ENCODE measurements at regions of chr1 and their contacts with region 1.

Region 1: GRCh38 chr1:198556971-198557370 is 16.5 kb upstream of the ATP6V1G3 start:
- DNase-seq: peak; percentile 84
- ATAC-seq: peak; percentile 90
- H3K4me3 ChIP-seq: peak overlapping the region in 3 of 5 experiments; percentile 8 to 53 (median 25)
- H3K4me3 Mint-ChIP-seq: peak overlapping the region; percentile 38
- H3K27ac ChIP-seq: peak overlapping the region; percentile 30 to 58
- H3K27ac Mint-ChIP-seq: peak overlapping the region; percentile 47
- H3K4me1 ChIP-seq: peaks cover 46 to 53% of the 10 kb centered on the region in 2 donors
- H3K4me1 Mint-ChIP-seq: peaks cover 60% of the 10 kb centered on the region
- H3K27me3 ChIP-seq: no peaks in the 10 kb centered on the region
- H3K27me3 Mint-ChIP-seq: no peaks in the 10 kb centered on the region
- CTCF ChIP-seq: no peak

Region 2: DNA sequence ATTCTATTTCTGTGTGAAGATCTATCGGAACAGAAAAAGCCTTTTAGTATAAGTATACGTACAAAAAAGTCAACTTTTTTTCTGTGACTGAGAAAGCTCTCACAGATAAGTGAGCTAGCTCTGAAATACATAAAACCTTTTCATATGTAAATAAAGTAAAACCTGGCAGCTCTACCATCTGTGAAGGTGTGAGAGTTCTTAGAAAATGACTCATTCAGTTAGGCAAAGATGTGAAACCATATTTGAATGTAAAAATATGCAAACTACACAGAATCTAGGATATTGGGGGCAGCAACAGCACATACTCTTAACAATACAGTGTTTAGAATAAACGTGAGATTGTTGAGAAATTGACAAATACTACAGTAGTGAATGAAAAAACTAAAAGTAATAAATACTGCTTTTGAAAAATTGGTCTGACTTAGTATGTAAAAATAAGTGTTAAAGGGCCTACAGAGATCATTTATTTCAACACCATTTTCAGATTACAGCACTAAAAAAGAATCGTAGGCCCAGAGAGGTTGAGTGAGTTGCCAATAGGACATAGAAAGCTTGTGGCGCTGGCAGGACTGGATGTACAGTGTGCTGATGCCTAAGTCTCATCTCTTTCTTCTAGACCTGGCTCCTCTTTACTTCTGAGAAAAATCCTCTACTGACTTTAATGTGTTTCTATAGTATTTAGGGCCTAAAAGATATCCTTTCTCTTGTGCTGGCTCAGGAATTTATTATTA is 36.3 kb before region 1 on chr1:
- CTCF ChIA-PET with region 1: interaction called, 6 read pairs
- POLR2A ChIA-PET with region 1: no interaction called
- intact Hi-C with region 1: loop called (anchors 5 kb)
- DNase-seq: peak; percentile 43
- ATAC-seq: peak; percentile 64
- H3K4me3 ChIP-seq: peak overlapping the region in 1 of 5 experiments; percentile 45
- H3K4me3 Mint-ChIP-seq: peak overlapping the region; percentile 67
- H3K27ac ChIP-seq: peak overlapping the region; percentile 35 to 59
- H3K27ac Mint-ChIP-seq: peak overlapping the region; percentile 37
- H3K4me1 ChIP-seq: peaks cover 20 to 34% of the 10 kb centered on the region in 2 donors
- H3K4me1 Mint-ChIP-seq: peaks cover 57% of the 10 kb centered on the region
- H3K27me3 ChIP-seq: no peaks in the 10 kb centered on the region
- H3K27me3 Mint-ChIP-seq: no peaks in the 10 kb centered on the region
- CTCF ChIP-seq: no peak

Region 3: GRCh38 chr1:198543670-198544260 is 13.2 kb before region 1 on chr1:
- CTCF ChIA-PET with region 1: interaction called, 4 read pairs
- POLR2A ChIA-PET with region 1: no interaction called
- intact Hi-C with region 1: loop called (anchors 1 kb)
- DNase-seq: peak; percentile 73
- ATAC-seq: peak; percentile 78
- H3K4me3 ChIP-seq: peak overlapping the region in 1 of 5 experiments; percentile 44
- H3K4me3 Mint-ChIP-seq: peak overlapping the region; percentile 77
- H3K27ac ChIP-seq: peak overlapping the region; percentile 77 to 81
- H3K27ac Mint-ChIP-seq: peak overlapping the region; percentile 94
- H3K4me1 ChIP-seq: peaks cover 37 to 57% of the 10 kb centered on the region in 2 donors
- H3K4me1 Mint-ChIP-seq: peaks cover 55% of the 10 kb centered on the region
- H3K27me3 ChIP-seq: no peaks in the 10 kb centered on the region
- H3K27me3 Mint-ChIP-seq: no peaks in the 10 kb centered on the region
- CTCF ChIP-seq: no peak

Region 4: GRCh38 chr1:198575798-198576641 is 19.0 kb after region 1 on chr1:
- CTCF ChIA-PET with region 1: interaction called, 4 read pairs
- POLR2A ChIA-PET with region 1: interaction called, 3 read pairs
- intact Hi-C with region 1: loop called (anchors 2 kb)
- DNase-seq: peak; percentile 61
- ATAC-seq: peak; percentile 63
- H3K4me3 ChIP-seq: peak overlapping the region in 1 of 5 experiments; percentile 45
- H3K4me3 Mint-ChIP-seq: peak overlapping the region; percentile 30
- H3K27ac ChIP-seq: peak overlapping the region; percentile 51 to 79
- H3K27ac Mint-ChIP-seq: peak overlapping the region; percentile 81
- H3K4me1 ChIP-seq: peaks cover 21 to 32% of the 10 kb centered on the region in 2 donors
- H3K4me1 Mint-ChIP-seq: peaks cover 29% of the 10 kb centered on the region
- H3K27me3 ChIP-seq: no peaks in the 10 kb centered on the region
- H3K27me3 Mint-ChIP-seq: no peaks in the 10 kb centered on the region
- CTCF ChIP-seq: peak; percentile 9

Region 5: GRCh38 chr1:198638894-198639635 is 82.1 kb after region 1 on chr1 and contains the start of gene PTPRC:
- CTCF ChIA-PET with region 1: no interaction called
- POLR2A ChIA-PET with region 1: interaction called, 3 read pairs
- intact Hi-C with region 1: loop called (anchors 1 kb)
- DNase-seq: peak; percentile 87
- ATAC-seq: peak; percentile 81
- H3K4me3 ChIP-seq: peak within 1 kb of the TSS; percentile 60 to 98 (median 87)
- H3K4me3 Mint-ChIP-seq: peak within 1 kb of the TSS; percentile 89
- H3K27ac ChIP-seq: peak within 1 kb of the TSS; percentile 82 to 94
- H3K27ac Mint-ChIP-seq: peak within 1 kb of the TSS; percentile 94
- H3K4me1 ChIP-seq: peaks cover 49 to 63% of the 10 kb centered on the region in 2 donors
- H3K4me1 Mint-ChIP-seq: peaks cover 65% of the 10 kb centered on the region
- H3K27me3 ChIP-seq: no peaks in the 10 kb centered on the region
- H3K27me3 Mint-ChIP-seq: no peaks in the 10 kb centered on the region
- CTCF ChIP-seq: no peak
- total RNA-seq, gene PTPRC: 543 and 545 TPM in 2 replicates

Measured in B cell (primary cell).